ENCODE measurements at regions of chr20 and their contacts with region 1.

Region 1: GRCh38 chr20:53891306-53891944 is 179.0 kb downstream of the BCAS1 start:
- DNase-seq: no peak
- H3K4me3 Mint-ChIP-seq: no peak overlapping the region
- H3K27ac Mint-ChIP-seq: no peak overlapping the region
- H3K4me1 Mint-ChIP-seq: peaks cover 30% of the 10 kb centered on the region
- H3K27me3 Mint-ChIP-seq: no peaks in the 10 kb centered on the region

Region 2: DNA sequence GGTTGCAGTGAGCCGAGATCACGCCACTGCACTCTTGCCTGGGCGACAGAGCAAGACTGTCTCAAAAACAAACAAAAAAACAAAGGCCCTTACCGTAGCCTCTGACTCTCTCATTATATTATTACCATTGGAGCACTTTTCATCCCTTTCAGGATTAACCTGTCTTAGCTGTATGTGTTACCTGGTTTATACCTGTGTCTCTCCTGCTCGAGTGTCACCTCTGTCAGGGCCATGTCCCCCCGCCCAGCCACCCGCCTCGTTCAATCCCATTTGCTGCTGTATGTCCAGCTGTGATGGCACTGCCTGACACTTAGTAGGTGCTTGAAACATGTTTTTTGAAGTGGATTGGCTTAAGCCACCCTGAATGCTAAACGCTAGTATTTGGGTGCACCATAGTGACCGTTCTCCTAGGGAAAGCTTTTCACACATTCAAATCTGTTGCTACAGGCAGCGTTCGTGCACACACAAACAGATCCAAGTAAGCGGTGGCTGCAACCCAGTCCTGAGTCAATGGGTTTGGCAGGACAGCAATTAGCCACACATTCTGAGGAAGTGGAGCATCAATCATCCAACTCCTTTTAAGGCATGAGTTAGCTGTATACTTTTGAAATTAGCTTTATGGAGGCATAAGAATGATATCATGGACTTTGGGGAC is 198.9 kb before region 1 on chr20:
- CTCF ChIA-PET with region 1: no interaction called
- POLR2A ChIA-PET with region 1: no interaction called
- intact Hi-C with region 1: loop called (anchors 2 kb)
- DNase-seq: peak; percentile 33
- H3K4me3 Mint-ChIP-seq: no peak overlapping the region
- H3K27ac Mint-ChIP-seq: peak overlapping the region; percentile 1
- H3K4me1 Mint-ChIP-seq: peaks cover 22% of the 10 kb centered on the region
- H3K27me3 Mint-ChIP-seq: no peaks in the 10 kb centered on the region

Region 3: GRCh38 chr20:53786445-53787267 is 104.8 kb before region 1 on chr20:
- CTCF ChIA-PET with region 1: no interaction called
- POLR2A ChIA-PET with region 1: no interaction called
- intact Hi-C with region 1: no loop called
- DNase-seq: no peak
- H3K4me3 Mint-ChIP-seq: no peak overlapping the region
- H3K27ac Mint-ChIP-seq: no peak overlapping the region
- H3K4me1 Mint-ChIP-seq: peaks cover 11% of the 10 kb centered on the region
- H3K27me3 Mint-ChIP-seq: no peaks in the 10 kb centered on the region

Region 4: GRCh38 chr20:53859684-53860083 is 31.7 kb before region 1 on chr20:
- CTCF ChIA-PET with region 1: no interaction called
- POLR2A ChIA-PET with region 1: no interaction called
- intact Hi-C with region 1: no loop called
- DNase-seq: no peak
- H3K4me3 Mint-ChIP-seq: no peak overlapping the region
- H3K27ac Mint-ChIP-seq: no peak overlapping the region
- H3K4me1 Mint-ChIP-seq: peaks cover 27% of the 10 kb centered on the region
- H3K27me3 Mint-ChIP-seq: no peaks in the 10 kb centered on the region

Region 5: DNA sequence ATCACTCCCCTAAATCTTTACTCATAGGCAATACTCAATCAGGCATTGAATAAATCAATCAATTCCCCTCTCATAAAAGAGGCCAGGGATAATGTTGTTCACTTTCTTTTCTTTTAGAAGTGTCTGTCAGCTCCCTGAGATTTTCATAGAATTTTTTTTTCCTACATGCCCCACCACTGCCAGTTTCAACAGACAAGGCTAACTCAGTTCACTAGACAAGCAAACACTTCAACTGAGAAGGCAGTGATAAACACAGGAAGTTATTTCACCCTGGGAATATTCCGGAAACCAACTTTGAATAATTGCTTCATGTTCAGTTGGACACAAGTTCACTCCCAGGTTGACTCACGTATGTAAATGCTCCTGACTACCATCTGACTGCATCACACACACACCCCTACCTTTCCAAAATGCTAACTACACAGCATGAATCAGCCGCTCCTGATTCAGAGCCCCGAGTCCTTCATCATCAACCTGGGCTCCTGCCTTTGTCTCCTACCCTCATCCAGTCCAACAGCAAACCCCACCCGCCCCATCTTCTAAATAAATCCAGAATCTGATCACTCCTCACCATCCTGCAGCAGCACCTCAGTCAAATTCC is 35.1 kb after region 1 on chr20:
- CTCF ChIA-PET with region 1: no interaction called
- POLR2A ChIA-PET with region 1: no interaction called
- intact Hi-C with region 1: loop called (anchors 5 kb)
- DNase-seq: peak; percentile 64
- H3K4me3 Mint-ChIP-seq: no peak overlapping the region
- H3K27ac Mint-ChIP-seq: peak overlapping the region; percentile 30
- H3K4me1 Mint-ChIP-seq: peaks cover 35% of the 10 kb centered on the region
- H3K27me3 Mint-ChIP-seq: no peaks in the 10 kb centered on the region

Region 6: GRCh38 chr20:54056762-54057639 is 165.6 kb after region 1 on chr20:
- CTCF ChIA-PET with region 1: no interaction called
- POLR2A ChIA-PET with region 1: no interaction called
- intact Hi-C with region 1: no loop called
- DNase-seq: no peak
- H3K4me3 Mint-ChIP-seq: no peak overlapping the region
- H3K27ac Mint-ChIP-seq: no peak overlapping the region
- H3K4me1 Mint-ChIP-seq: no peaks in the 10 kb centered on the region
- H3K27me3 Mint-ChIP-seq: no peaks in the 10 kb centered on the region

Measured in activated CD4-positive, alpha-beta memory T cell treated with anti-CD3 and anti-CD28 coated beads for 36 hours (primary cell).